Heart left ventricle (tissue), 16 donors: ENCODE measurements at regions of chr3 and their contacts with region 1.

Region 1: GRCh38 chr3:44338010-44338827 is at the start of gene TCAIM:
- DNase-seq: peak; percentile 97 to 99 (median 99)
- ATAC-seq: peak; percentile 97 to 99 (median 98)
- H3K4me3 ChIP-seq: peak within 1 kb of the TSS; percentile 48 to 80 (median 66)
- H3K27ac ChIP-seq: peak within 1 kb of the TSS; percentile 92 to 98 (median 96)
- H3K4me1 ChIP-seq: peaks cover 0 to 42% (median 20%) of the 10 kb centered on the region in 12 donors
- H3K27me3 ChIP-seq: no peaks in the 10 kb centered on the region
- CTCF ChIP-seq: peak in 1 of 12 donors; percentile 2
- POLR2A ChIP-seq: peak; percentile 46 to 85
- total RNA-seq, gene TCAIM: 24.1 to 45.0 (median 32.4) TPM

Region 2: DNA sequence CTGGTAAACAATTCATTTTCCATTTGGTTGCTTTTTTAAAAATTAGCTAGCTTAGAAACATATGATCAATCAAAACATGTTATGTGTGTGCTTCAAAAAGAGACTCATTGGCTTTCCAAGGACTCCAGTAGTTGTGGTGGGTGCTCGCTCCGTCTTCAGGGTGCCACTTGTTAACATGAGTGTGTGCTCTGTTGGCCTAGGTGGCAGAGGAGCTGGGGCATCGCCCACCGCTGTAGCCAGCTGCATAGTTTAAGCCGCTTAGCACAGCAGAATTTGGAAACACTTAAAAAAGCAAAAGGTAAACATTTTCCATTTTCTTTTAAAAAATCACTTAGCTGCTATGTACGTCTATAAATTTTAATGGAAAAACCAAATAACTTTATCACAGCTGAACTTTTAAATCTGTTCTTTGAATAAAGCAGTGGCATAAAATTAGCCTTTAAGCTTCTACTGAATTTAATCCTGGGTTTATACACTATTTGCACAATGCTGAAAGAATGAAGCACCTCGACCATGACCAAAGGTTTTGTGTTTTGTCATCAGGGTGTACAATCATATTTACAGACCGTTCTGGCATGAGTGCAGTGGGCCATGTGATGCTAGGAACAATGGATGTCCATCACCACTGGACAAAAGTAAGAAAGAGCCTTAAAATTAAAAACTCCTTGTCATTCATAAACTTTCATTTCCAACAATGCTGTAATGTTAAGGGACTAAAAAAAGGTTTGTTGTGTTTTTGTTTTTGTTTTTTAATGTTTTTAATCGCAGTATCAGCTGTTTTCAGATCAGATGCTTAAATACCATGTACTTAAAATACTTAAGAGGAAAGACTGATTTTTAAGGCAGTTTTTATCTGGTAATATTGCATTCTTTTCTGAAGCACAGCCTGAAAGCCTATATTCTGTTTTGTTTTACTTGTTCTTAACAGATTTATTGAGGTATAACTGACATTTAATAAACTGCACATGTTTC is 58.3 kb after region 1 on chr3:
- intact Hi-C with region 1: no loop called
- DNase-seq: no peak
- ATAC-seq: no peak
- H3K4me3 ChIP-seq: no peak overlapping the region
- H3K27ac ChIP-seq: no peak overlapping the region
- H3K4me1 ChIP-seq: peaks cover 0 to 14% (median 0%) of the 10 kb centered on the region in 12 donors
- H3K27me3 ChIP-seq: no peaks in the 10 kb centered on the region
- CTCF ChIP-seq: no peak
- POLR2A ChIP-seq: no peak

Region 3: GRCh38 chr3:44439499-44440295 is 101.5 kb after region 1 on chr3:
- intact Hi-C with region 1: loop called in 6 of 10 experiments (anchors 5 to 10 kb)
- DNase-seq: peak; percentile 75 to 86 (median 80)
- ATAC-seq: peak; percentile 92 to 97 (median 96)
- H3K4me3 ChIP-seq: peak overlapping the region in 10 of 12 donors; percentile 12 to 54 (median 34)
- H3K27ac ChIP-seq: peak overlapping the region; percentile 88 to 98 (median 92)
- H3K4me1 ChIP-seq: peaks cover 0 to 33% (median 23%) of the 10 kb centered on the region in 12 donors
- H3K27me3 ChIP-seq: no peaks in the 10 kb centered on the region
- CTCF ChIP-seq: no peak
- POLR2A ChIP-seq: peak in 1 of 2 donors; percentile 40

Region 4: GRCh38 chr3:44510000-44510368 is 171.8 kb after region 1 on chr3:
- intact Hi-C with region 1: loop called in 5 of 10 experiments (anchors 1 to 10 kb)
- DNase-seq: no peak
- ATAC-seq: peak in 1 of 4 donors; percentile 5
- H3K4me3 ChIP-seq: peak overlapping the region; percentile 74 to 99 (median 92)
- H3K27ac ChIP-seq: peak overlapping the region; percentile 49 to 94 (median 89)
- H3K4me1 ChIP-seq: peaks cover 0 to 29% (median 14%) of the 10 kb centered on the region in 12 donors
- H3K27me3 ChIP-seq: no peaks in the 10 kb centered on the region
- CTCF ChIP-seq: no peak
- POLR2A ChIP-seq: no peak

Region 5: GRCh38 chr3:44648564-44649229 is 310.5 kb after region 1 on chr3 and contains the start of gene ZNF35:
- intact Hi-C with region 1: loop called in 1 of 10 experiments (anchors 10 kb)
- DNase-seq: peak; percentile 75 to 88 (median 85)
- ATAC-seq: peak; percentile 91 to 98 (median 98)
- H3K4me3 ChIP-seq: peak within 1 kb of the TSS; percentile 75 to 99 (median 88)
- H3K27ac ChIP-seq: peak within 1 kb of the TSS in 11 of 12 donors; percentile 56 to 81 (median 76)
- H3K4me1 ChIP-seq: peaks cover 0 to 15% (median 10%) of the 10 kb centered on the region in 12 donors
- H3K27me3 ChIP-seq: no peaks in the 10 kb centered on the region
- CTCF ChIP-seq: no peak
- POLR2A ChIP-seq: peak in 1 of 2 donors; percentile 24
- total RNA-seq, gene ZNF35: 6.0 to 14.6 (median 6.5) TPM